Activated CD8-positive, alpha-beta memory T cell treated with anti-CD3 and anti-CD28 coated beads, Interleukin-2, amount 10 ng/mL, durations not matched to agents 7 days and 5 days (primary cell): ENCODE measurements at regions of chr4 and their contacts with region 1.

Region 1: DNA sequence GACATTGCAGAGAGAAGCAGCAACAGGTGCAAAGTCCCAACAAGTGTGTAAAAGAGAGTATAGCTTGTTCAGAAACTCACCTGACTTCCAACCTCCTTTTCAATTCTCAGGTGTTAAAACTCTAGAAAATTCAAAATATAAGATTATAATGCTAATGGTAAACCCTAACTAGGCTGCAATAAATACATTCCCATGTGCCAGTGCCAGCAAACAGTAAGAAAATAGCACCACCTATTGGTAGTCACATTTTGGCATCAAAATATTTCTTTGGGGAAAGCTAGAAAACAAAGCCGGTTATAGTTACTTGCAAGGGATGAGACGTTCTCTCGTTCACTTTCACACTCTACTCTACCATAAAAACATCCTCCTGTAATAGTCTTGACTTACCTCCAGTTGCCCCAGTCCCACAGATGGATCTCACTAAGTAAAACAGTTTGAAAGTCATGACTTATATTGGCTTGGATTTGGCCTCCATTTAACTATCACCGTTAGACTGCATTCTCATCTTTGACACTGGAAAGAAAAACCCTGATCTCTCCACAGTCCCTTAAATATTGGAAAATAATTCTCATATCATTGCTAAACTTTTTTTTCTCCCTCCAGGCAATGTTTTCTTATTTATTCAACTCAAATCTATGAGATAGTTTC is 9.6 kb downstream of the BMP3 start:
- DNase-seq: no peak
- ATAC-seq: no peak
- H3K4me3 Mint-ChIP-seq: no peak overlapping the region
- H3K27ac Mint-ChIP-seq: no peak overlapping the region
- H3K4me1 Mint-ChIP-seq: no peaks in the 10 kb centered on the region
- H3K27me3 Mint-ChIP-seq: peaks cover 31% of the 10 kb centered on the region

Region 2: GRCh38 chr4:80365928-80366327 is 674.2 kb before region 1 on chr4:
- CTCF ChIA-PET with region 1: interaction called, 15 read pairs
- DNase-seq: peak; percentile 66
- ATAC-seq: peak; percentile 76
- H3K4me3 Mint-ChIP-seq: no peak overlapping the region
- H3K27ac Mint-ChIP-seq: no peak overlapping the region
- H3K4me1 Mint-ChIP-seq: no peaks in the 10 kb centered on the region
- H3K27me3 Mint-ChIP-seq: peaks cover under 1% of the 10 kb centered on the region